ENCODE measurements at regions of chr7 and their contacts with region 1.

Region 1: GRCh38 chr7:151057989-151058780 is 488 bp upstream of the CDK5 start:
- DNase-seq: peak; percentile 97 to 100 (median 100)

Region 2: DNA sequence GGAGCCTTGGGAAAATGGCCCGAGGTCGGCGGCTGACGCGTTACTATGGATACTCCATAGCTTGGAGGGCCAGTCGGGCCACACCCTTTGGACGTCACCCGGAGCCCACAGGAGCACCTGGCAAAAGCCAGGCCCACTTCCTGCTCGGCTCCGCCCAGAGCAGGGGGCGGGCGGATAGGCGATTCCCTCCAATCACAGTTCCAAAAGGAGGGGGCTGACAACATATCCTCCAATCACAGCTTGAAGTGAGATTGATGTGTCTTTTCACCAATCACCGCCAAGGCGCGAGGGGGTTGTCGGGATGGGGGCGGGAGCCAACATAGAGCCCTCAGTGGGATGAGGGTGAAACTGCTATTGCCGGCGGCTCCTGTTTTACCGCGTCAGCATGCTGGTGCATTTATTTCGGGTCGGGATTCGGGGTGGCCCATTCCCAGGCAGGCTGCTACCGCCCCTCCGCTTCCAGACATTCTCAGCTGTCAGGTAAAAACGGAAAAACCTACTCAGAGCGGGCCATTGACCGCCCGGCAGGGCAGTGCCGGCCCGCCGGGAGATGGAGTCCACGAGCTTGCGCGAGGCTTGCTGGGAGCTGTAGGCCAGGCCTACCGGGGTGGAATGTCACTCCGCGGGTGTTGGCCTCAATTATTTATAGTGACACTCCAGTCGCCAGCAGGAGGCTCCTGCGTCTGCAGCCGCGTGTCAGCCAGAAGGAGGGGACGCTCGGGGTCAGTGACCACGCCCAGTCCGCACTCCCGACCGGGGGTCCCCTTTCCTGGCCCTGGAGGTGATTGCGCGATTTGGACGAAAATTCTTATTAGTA is 29.8 kb before region 1 on chr7 and contains the start of gene ABCB8:
- intact Hi-C with region 1: loop called (anchors 1 kb)
- DNase-seq: peak; percentile 92 to 99 (median 96)

Region 3: GRCh38 chr7:151080522-151081169 is 22.5 kb after region 1 on chr7 and contains the start of gene FASTK:
- intact Hi-C with region 1: loop called (anchors 1 kb)
- DNase-seq: peak; percentile 90 to 99 (median 94)

Region 4: DNA sequence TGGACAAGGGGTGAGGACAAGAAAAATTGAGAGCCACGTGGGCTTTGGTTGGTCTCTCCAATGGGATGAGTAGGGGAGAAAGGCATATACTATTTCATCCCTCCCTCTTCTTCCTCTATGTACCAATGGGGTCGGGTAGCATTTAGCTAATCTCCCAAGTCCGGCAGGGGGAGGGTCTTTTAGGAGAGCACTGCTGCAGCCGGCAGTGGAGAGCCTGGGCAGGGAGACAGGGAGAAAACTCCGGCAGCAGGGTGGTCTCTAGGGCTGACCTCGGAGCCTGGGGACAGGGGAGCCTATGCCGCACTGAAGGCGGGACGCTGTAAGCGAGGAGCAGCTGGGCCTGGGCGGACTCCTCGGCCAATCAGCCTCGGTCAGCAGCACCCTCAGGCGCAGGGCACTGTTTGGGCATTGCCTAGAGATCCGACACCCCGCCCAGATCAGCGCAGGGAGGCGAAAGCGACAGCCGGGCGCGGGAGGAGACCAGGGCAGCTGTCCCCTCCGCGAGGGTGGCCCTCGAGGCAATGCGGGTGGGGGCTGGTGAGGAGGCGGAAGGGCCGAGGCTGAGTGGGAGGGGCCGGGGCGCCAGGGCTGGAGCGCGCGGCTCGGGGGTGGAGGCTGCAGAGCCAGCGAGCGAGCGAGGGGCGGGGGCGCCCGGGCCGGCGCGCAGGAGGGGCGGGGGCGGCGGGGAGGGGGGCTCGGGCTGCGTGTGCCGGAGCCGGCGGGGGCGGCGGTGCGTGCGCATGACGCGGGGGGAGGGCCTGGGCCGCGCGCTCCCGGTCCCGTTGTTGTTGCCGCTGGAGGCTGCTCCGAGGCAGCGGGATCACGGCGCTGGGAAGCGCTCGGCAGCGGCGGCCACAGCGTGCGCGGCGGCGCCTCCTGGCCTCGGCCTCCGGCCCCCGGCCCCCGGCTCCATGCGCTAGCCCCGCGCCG is 27.8 kb after region 1 on chr7 and contains the start of gene AGAP3:
- intact Hi-C with region 1: loop called (anchors 1 kb)
- DNase-seq: peak; percentile 81 to 98 (median 86)